ENCODE measurements at regions of chr3 and their contacts with region 1.

Region 1: GRCh38 chr3:101069901-101070798 is 76.9 kb upstream of the ABI3BP start:
- DNase-seq: peak; percentile 83
- H3K4me3 Mint-ChIP-seq: no peak overlapping the region
- H3K27ac Mint-ChIP-seq: no peak overlapping the region
- H3K4me1 Mint-ChIP-seq: peaks cover 5% of the 10 kb centered on the region
- H3K27me3 Mint-ChIP-seq: peaks cover 16% of the 10 kb centered on the region

Region 2: DNA sequence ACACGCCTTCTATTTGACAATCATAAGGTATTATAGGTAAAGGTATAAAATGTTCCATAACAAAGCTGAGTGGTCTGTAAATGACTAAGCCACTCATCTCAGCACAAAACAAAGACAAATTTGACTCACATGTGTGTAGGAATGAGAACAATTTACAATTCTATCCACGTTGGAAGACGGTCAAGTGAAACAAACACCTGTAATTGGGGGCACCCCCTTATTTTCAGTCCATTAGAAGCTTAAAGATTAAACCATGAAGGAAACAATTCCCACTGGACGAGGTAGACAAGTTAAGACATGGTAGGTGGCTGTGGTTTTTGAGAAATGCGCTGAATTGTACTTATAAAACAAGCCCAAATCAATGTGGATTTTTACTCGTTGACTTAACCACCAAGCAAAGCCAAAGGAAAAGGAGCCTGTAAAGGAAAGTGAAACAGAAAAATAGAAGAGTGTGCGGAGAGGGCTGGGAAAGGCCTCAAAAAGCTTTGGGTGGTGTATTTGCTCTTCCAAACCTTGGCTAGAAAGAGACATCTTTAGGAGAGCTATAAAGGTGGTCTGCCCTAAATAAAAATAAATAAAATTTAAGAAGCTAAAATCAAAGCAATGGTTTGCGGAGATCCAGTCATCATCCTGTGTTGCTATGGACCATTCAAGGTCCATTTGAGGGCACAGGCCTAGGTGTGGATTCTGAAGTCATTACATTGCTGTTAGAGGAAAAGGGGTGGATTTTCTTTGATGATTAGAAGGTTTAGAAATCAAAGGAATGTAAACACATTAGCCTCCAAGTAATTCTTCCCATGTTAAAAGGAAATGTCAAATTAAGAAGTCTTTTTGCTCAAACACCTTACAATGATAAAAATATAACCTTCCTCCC is 225.8 kb before region 1 on chr3:
- CTCF ChIA-PET with region 1: no interaction called
- POLR2A ChIA-PET with region 1: no interaction called
- intact Hi-C with region 1: no loop called
- DNase-seq: no peak
- H3K4me3 Mint-ChIP-seq: no peak overlapping the region
- H3K27ac Mint-ChIP-seq: no peak overlapping the region
- H3K4me1 Mint-ChIP-seq: peaks cover 1% of the 10 kb centered on the region
- H3K27me3 Mint-ChIP-seq: peaks cover 9% of the 10 kb centered on the region

Region 3: DNA sequence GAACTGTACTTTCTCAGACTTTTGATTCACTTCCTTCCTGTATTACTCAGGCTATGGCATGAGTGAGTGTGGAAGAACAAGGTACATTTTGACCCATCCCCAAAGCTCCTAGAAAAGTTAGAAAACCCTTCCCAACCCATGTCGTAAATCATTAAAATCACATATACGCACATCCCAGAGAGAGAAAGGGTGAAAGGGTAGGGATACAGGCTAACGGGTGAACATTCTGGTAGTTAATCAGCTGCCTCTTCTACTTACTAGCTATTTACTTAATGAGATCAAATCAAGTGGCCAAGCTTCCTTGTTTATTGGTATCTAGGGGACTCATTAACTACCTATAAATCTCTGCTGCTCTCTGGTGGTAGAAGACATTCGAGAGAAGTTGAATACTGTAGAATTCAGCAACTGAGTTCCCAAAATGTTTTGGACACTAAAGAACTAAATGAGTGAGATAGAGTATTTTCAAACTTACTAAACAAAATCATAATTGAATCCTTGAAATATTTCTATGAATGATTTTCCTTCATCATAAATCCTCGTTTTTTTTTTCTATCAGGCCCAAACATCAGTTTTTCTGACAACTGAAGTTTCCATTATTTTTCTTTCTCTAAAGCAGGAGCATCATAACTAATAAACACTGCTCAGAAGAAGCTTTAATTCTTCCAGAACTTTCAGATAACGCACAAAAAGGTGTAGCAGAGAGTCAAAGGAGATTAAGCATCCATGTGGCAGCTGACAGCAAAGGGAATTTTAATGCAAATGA is 126.0 kb after region 1 on chr3:
- CTCF ChIA-PET with region 1: interaction called, 28 read pairs
- POLR2A ChIA-PET with region 1: no interaction called
- intact Hi-C with region 1: loop called (anchors 1 kb)
- DNase-seq: no peak
- H3K4me3 Mint-ChIP-seq: no peak overlapping the region
- H3K27ac Mint-ChIP-seq: no peak overlapping the region
- H3K4me1 Mint-ChIP-seq: no peaks in the 10 kb centered on the region
- H3K27me3 Mint-ChIP-seq: peaks cover 5% of the 10 kb centered on the region

Region 4: GRCh38 chr3:101414121-101414520 is 344.0 kb after region 1 on chr3:
- CTCF ChIA-PET with region 1: no interaction called
- POLR2A ChIA-PET with region 1: no interaction called
- intact Hi-C with region 1: no loop called
- DNase-seq: no peak
- H3K4me3 Mint-ChIP-seq: no peak overlapping the region
- H3K27ac Mint-ChIP-seq: peak overlapping the region; percentile 43
- H3K4me1 Mint-ChIP-seq: peaks cover 33% of the 10 kb centered on the region
- H3K27me3 Mint-ChIP-seq: no peaks in the 10 kb centered on the region

Region 5: DNA sequence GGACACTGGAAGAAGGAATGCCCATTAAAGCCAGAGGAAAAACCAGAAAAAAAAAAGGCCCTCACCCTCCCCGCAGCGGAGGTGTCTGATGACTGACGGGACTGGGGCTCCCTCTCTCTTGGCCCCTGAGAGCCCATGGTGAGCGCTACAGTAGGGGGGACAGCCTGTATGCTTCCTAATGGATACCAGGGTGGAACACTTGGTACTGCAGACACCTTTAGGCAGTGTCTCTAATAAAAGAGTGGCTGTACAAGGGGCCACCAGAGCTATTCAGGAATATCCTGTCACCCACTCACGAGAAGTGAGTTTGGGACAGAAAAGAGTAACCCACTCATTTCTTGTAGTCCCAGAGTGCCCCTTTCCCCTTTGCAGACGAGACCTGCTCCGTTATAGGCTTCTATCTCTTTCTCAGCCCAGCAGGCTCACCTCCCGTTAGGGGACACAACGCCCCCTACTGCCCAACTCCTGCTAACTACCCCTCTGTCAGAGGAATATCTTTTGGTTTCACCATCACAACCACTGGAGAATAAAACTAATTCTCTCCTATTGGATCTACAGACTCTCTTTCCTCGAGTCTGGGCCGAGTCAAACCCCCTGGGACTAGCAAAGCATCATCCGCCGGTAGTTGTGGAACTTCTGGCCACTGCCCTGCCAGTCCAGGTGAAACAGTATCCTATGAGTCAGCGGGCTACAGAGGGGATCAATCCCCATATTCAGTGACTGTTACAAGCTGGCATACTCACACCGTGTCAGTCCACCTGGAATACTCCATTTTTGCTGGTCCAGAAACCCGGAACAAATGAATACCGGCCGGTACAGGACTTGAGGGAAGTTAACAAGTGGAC is 566.0 kb after region 1 on chr3:
- CTCF ChIA-PET with region 1: no interaction called
- POLR2A ChIA-PET with region 1: no interaction called
- intact Hi-C with region 1: loop called (anchors 1 kb)
- DNase-seq: peak; percentile 85
- H3K4me3 Mint-ChIP-seq: no peak overlapping the region
- H3K27ac Mint-ChIP-seq: no peak overlapping the region
- H3K4me1 Mint-ChIP-seq: no peaks in the 10 kb centered on the region
- H3K27me3 Mint-ChIP-seq: no peaks in the 10 kb centered on the region

Measured in activated CD4-positive, alpha-beta memory T cell treated with anti-CD3 and anti-CD28 coated beads for 36 hours (primary cell).